Activated CD4-positive, alpha-beta T cell treated with anti-CD3 and anti-CD28 coated beads for 36 hours (primary cell): ENCODE measurements at regions of chr16 and their contacts with region 1.

Region 1: DNA sequence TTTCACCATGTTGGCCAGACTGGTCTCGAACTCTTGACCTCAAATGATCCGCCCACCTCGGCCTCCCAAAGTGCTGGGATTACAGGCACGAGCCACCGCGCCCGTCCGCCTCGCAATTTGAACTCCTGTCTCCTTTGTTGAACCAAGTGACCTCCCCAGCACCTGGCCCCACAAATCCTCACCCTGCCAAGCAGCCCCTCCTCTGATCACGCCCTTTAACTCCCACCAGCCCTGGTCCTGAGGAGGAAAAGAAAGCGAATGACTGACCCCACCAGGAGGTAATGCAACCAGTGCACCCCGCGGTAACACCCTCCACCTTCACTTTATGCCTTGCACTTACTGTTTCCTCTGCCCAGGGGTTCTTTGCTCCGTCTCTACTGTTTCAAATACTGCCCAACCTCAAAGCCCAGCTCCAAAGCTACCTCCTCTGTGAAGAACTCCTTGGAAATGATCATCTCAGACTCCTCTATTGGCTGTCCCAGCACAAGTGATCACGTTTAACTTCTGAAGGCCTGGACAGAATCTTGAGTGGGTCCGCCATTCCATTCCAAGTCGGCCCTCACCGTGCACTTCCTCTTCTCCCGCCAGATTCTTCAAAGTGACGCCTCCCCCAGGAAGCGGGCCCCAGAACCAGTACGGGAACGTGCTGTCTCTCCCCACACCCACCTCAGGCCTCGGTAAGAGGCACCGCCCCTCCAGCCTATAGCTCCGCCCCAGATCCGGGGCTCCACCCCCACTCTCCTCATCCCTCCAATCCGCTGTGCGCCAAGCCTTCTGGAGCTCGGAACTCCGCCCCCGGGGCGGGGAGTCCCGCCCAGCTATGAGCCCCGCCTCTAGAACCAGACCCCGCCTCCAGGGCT is 4.4 kb downstream of the CD19 start:
- DNase-seq: peak; percentile 95
- ATAC-seq: peak; percentile 100
- H3K4me3 Mint-ChIP-seq: peak overlapping the region; percentile 71
- H3K27ac Mint-ChIP-seq: peak overlapping the region; percentile 83
- H3K4me1 Mint-ChIP-seq: peaks cover 14% of the 10 kb centered on the region
- H3K27me3 Mint-ChIP-seq: no peaks in the 10 kb centered on the region

Region 2: GRCh38 chr16:28211712-28212534 is 724.2 kb before region 1 on chr16 and contains the start of gene XPO6:
- CTCF ChIA-PET with region 1: no interaction called
- POLR2A ChIA-PET with region 1: no interaction called
- intact Hi-C with region 1: no loop called
- DNase-seq: peak; percentile 100
- ATAC-seq: peak; percentile 82
- H3K4me3 Mint-ChIP-seq: peak within 1 kb of the TSS; percentile 96
- H3K27ac Mint-ChIP-seq: peak within 1 kb of the TSS; percentile 99
- H3K4me1 Mint-ChIP-seq: peaks cover 32% of the 10 kb centered on the region
- H3K27me3 Mint-ChIP-seq: no peaks in the 10 kb centered on the region
- total RNA-seq, gene XPO6: 241 to 368 TPM

Region 3: GRCh38 chr16:28617874-28618273 is 318.3 kb before region 1 on chr16:
- CTCF ChIA-PET with region 1: no interaction called
- POLR2A ChIA-PET with region 1: no interaction called
- intact Hi-C with region 1: no loop called
- DNase-seq: no peak
- ATAC-seq: no peak
- H3K4me3 Mint-ChIP-seq: no peak overlapping the region
- H3K27ac Mint-ChIP-seq: no peak overlapping the region
- H3K4me1 Mint-ChIP-seq: peaks cover 11% of the 10 kb centered on the region
- H3K27me3 Mint-ChIP-seq: no peaks in the 10 kb centered on the region

Region 4: DNA sequence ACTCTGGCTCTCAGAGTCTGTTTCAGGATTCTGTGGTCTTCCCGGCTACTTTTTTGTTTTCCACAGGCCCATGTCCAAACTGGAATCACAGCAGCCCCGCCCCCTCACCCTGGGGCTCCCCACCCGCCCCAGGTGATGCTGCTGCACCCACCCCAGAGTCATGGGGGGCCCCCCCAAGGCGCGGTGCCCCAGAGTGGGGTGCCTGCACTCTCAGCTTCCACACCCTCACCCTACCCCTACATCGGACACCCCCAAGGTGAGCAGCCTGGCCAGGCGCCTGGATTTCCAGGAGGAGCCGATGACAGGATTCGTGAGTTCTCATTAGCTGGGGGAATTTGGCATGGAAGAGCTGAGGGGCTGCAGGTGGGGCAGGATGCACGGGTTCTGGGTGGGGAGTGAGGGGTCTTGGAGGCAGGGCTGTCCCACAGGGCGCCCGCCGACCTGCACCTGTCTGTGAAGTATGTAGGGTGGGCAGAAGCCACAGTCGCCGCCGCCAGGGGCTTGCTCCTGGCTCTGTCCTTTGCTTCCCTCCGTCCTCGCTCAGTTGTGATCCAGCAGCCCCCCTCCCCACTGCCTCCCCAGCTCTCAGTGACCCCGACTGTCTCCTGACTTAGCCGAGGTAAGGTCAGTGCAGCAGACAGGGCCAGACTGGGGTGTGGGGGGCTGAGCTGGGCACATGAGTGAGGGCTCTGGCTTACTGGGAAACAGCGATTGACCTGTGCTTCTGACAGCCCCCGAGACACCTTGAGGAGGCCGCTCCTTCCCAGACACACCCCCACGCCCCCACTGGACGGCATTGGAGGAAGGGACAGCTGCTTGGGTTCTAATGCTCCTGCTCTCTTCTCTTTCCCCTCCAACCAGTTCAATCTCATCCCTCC is 100.0 kb before region 1 on chr16:
- CTCF ChIA-PET with region 1: no interaction called
- POLR2A ChIA-PET with region 1: interaction called, 10 read pairs
- intact Hi-C with region 1: no loop called
- DNase-seq: no peak
- ATAC-seq: no peak
- H3K4me3 Mint-ChIP-seq: no peak overlapping the region
- H3K27ac Mint-ChIP-seq: no peak overlapping the region
- H3K4me1 Mint-ChIP-seq: peaks cover 19% of the 10 kb centered on the region
- H3K27me3 Mint-ChIP-seq: no peaks in the 10 kb centered on the region

Region 5: GRCh38 chr16:28846080-28846932 is 89.8 kb before region 1 on chr16 and contains the start of gene TUFM:
- CTCF ChIA-PET with region 1: no interaction called
- POLR2A ChIA-PET with region 1: no interaction called
- intact Hi-C with region 1: loop called in 1 of 2 experiments (anchors 1 kb)
- DNase-seq: peak; percentile 99
- ATAC-seq: peak; percentile 94
- H3K4me3 Mint-ChIP-seq: peak within 1 kb of the TSS; percentile 97
- H3K27ac Mint-ChIP-seq: peak within 1 kb of the TSS; percentile 97
- H3K4me1 Mint-ChIP-seq: peaks cover 23% of the 10 kb centered on the region
- H3K27me3 Mint-ChIP-seq: no peaks in the 10 kb centered on the region
- total RNA-seq, gene TUFM: 224 to 241 TPM

Region 6: GRCh38 chr16:28863929-28864793 is 72.0 kb before region 1 on chr16:
- CTCF ChIA-PET with region 1: no interaction called
- POLR2A ChIA-PET with region 1: no interaction called
- intact Hi-C with region 1: loop called in 1 of 2 experiments (anchors 2 kb)
- DNase-seq: peak; percentile 44
- ATAC-seq: no peak
- H3K4me3 Mint-ChIP-seq: peak overlapping the region; percentile 96
- H3K27ac Mint-ChIP-seq: peak overlapping the region; percentile 96
- H3K4me1 Mint-ChIP-seq: peaks cover 21% of the 10 kb centered on the region
- H3K27me3 Mint-ChIP-seq: no peaks in the 10 kb centered on the region

Region 7: GRCh38 chr16:28879841-28880588 is 56.1 kb before region 1 on chr16:
- CTCF ChIA-PET with region 1: no interaction called
- POLR2A ChIA-PET with region 1: interaction called, 3 read pairs
- intact Hi-C with region 1: loop called in 1 of 2 experiments (anchors 1 kb)
- DNase-seq: peak; percentile 97
- ATAC-seq: peak; percentile 97
- H3K4me3 Mint-ChIP-seq: peak overlapping the region; percentile 85
- H3K27ac Mint-ChIP-seq: peak overlapping the region; percentile 76
- H3K4me1 Mint-ChIP-seq: peaks cover 20% of the 10 kb centered on the region
- H3K27me3 Mint-ChIP-seq: peaks cover 7% of the 10 kb centered on the region

Region 8: DNA sequence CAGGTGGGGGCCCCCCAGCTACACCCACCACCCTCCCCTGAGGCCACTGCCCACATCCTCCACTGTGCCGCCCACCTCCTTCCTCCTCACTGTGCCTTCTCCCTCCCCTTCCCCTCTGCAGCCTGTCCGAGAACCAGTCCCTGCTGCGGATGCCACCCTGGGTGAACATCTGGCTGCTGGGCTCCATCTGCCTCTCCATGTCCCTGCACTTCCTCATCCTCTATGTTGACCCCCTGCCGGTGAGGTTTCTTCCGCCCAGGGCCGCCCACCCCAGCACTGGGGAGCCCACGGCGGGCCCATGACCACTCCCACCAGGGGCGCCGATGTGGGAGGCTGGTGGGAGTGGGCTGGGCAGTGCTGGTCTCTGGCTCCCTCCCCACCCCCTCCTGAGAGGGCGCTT is 33.2 kb before region 1 on chr16:
- CTCF ChIA-PET with region 1: no interaction called
- POLR2A ChIA-PET with region 1: no interaction called
- intact Hi-C with region 1: no loop called
- DNase-seq: no peak
- ATAC-seq: no peak
- H3K4me3 Mint-ChIP-seq: no peak overlapping the region
- H3K27ac Mint-ChIP-seq: no peak overlapping the region
- H3K4me1 Mint-ChIP-seq: no peaks in the 10 kb centered on the region
- H3K27me3 Mint-ChIP-seq: no peaks in the 10 kb centered on the region

Region 9: GRCh38 chr16:28924732-28925385 is 11.3 kb before region 1 on chr16 and contains the start of gene RABEP2:
- CTCF ChIA-PET with region 1: interaction called, 7 read pairs
- POLR2A ChIA-PET with region 1: interaction called, 8 read pairs
- intact Hi-C with region 1: loop called in 1 of 2 experiments (anchors 1 kb)
- DNase-seq: peak; percentile 99
- ATAC-seq: peak; percentile 93
- H3K4me3 Mint-ChIP-seq: peak within 1 kb of the TSS; percentile 87
- H3K27ac Mint-ChIP-seq: peak within 1 kb of the TSS; percentile 96
- H3K4me1 Mint-ChIP-seq: peaks cover 14% of the 10 kb centered on the region
- H3K27me3 Mint-ChIP-seq: no peaks in the 10 kb centered on the region
- total RNA-seq, gene RABEP2: 8.1 to 12.9 TPM

Region 10: DNA sequence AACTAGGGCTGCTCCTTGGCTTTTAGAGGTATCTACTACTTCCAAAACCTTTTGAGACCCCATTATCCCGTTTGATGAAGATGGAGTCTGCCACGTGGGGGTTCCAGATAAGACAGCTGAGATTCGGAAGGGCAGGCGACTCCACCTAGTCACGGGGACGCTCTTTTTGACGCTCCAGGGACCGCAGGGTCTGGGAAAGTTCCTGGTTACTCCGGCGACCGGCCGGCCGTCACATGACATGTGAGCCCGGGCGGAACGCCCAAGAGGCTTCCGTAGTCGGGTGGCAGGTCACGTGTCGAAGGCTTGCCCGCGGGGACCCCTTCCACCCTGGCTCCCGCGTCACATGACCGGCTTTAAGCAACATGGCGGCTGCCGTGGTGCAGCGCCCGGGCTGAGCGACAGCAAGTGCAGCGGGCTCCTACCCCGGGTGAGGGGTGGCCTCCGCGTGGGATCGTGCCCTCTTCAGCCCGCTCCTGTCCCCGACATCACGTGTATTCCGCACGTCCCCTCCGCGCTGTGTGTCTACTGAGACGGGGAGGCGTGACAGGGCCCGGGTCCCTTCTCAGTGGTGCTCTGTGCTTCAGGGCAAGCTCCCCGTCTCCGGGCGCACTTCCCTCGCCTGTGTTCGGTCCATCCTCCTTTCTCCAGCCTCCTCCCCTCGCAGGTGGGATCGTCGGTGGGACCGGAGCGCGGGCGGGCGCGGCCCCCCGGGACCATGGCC is 38.4 kb after region 1 on chr16 and contains the start of gene SPNS1:
- CTCF ChIA-PET with region 1: no interaction called
- POLR2A ChIA-PET with region 1: no interaction called
- intact Hi-C with region 1: no loop called
- DNase-seq: peak; percentile 98
- ATAC-seq: peak; percentile 94
- H3K4me3 Mint-ChIP-seq: peak within 1 kb of the TSS; percentile 98
- H3K27ac Mint-ChIP-seq: peak within 1 kb of the TSS; percentile 93
- H3K4me1 Mint-ChIP-seq: peaks cover 30% of the 10 kb centered on the region
- H3K27me3 Mint-ChIP-seq: no peaks in the 10 kb centered on the region
- total RNA-seq, gene SPNS1: 12.7 to 14.2 TPM